Posterior cingulate gyrus (tissue), 11 donors: ENCODE measurements at regions of chr4 and their contacts with region 1.

Region 1: GRCh38 chr4:127880764-127881562 is at the start of gene PLK4:
- DNase-seq: peak; percentile 86 to 99 (median 92)

Region 2: GRCh38 chr4:127782274-127783025 is 98.5 kb before region 1 on chr4 and contains the start of gene HSPA4L:
- intact Hi-C with region 1: loop called (anchors 5 kb)
- DNase-seq: peak in 9 of 10 donors; percentile 34 to 91 (median 54)

Region 3: DNA sequence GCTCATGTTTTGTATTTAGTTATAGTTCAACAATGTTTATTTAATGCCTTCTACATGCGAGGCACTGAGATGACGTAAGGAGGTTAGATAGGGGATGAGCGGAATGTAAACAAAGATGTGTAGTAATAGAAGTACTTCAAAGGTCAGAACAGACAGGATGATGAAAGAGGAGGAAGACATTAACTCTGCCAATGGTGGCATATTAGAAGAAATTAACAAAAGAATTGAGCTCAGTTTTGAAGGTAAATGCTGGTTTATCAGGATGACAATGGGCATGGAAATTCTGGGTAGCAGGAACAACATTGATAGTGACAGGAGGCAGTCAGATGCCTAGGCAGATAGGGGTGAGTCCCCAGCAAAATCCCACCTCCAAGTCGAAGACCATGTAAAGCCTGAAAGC is 469.0 kb after region 1 on chr4:
- intact Hi-C with region 1: no loop called
- DNase-seq: no peak

Region 4: GRCh38 chr4:128707864-128708263 is 826.9 kb after region 1 on chr4:
- intact Hi-C with region 1: no loop called
- DNase-seq: no peak